AG04449 (cell line): ENCODE measurements at regions of chr16 and their contacts with region 1.

Region 1: DNA sequence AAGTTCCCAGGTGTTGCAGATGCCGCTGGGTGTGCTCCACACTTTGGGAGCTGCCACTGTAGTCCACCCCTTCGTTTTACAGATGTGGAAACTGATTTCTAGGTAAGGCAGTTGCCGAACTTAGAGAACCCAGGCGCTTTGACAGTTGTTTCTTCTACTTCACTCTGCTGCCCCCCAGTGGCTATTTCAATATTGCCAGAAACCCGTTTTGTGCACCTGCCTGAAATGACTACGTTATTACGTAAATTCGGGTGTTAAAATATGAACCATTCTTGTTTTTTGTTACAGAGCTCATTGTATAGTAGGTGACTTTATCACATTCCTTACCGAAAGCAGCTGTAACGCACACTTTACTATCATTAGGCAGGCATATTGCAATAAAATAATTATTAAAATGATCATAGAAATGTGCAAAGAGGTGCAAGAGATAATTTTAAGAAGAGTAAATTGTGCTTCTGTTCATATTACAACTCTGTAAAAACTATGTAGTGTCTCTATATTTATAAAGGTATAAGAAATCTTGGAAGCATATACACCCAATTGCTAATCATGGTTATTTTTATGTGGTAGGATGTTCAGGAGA is 44.9 kb downstream of the OTOA start:
- DNase-seq: peak; percentile 7
- H3K4me3 ChIP-seq: no peak overlapping the region
- CTCF ChIP-seq: peak; percentile 53

Region 2: DNA sequence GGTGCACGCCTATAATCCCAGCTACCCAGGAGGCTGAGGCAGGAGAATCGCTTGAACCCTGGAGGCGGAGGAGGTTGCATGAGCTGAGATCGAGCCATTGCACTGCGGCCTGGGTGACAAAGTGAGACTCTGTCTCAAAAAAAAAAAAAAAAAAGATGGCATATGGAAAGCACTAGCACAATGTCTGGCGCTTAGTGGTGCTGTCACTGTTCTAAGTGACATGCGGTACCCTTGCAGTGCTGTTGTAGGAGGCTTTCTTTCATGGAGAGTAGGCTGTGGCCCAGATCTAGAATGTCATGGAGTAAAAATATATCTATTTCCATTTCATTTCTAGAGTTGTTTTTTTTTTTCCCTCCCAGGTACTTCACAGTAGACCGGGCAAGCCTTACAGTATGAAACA is 123.8 kb before region 1 on chr16:
- CTCF ChIA-PET with region 1: interaction called, 22 read pairs
- POLR2A ChIA-PET with region 1: no interaction called
- DNase-seq: no peak
- H3K4me3 ChIP-seq: no peak overlapping the region
- CTCF ChIP-seq: no peak

Region 3: DNA sequence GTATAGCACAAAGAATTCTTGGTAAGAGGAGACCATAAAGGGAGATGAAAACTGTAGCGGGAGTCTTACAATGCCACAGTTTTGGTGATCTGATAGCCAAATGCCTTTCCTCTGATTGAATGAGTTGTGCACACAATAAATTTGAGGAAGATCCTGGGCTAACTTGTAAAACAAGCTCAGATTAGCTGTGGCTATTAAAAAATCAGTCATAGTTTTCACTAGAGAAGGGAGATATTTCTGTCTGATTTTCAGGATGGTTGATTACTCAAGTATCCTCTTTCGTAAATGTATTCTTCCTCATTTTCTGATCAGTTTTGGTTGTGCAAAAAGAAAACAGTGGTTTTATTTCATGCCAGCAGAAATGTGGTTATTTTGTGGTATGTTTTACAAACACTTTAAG is 118.3 kb before region 1 on chr16:
- CTCF ChIA-PET with region 1: interaction called, 17 read pairs
- POLR2A ChIA-PET with region 1: no interaction called
- DNase-seq: no peak
- H3K4me3 ChIP-seq: no peak overlapping the region
- CTCF ChIP-seq: no peak

Region 4: GRCh38 chr16:21684199-21684598 is 24.4 kb before region 1 on chr16:
- CTCF ChIA-PET with region 1: interaction called, 13 read pairs
- POLR2A ChIA-PET with region 1: no interaction called
- DNase-seq: no peak
- H3K4me3 ChIP-seq: no peak overlapping the region
- CTCF ChIP-seq: peak; percentile 13

Region 5: DNA sequence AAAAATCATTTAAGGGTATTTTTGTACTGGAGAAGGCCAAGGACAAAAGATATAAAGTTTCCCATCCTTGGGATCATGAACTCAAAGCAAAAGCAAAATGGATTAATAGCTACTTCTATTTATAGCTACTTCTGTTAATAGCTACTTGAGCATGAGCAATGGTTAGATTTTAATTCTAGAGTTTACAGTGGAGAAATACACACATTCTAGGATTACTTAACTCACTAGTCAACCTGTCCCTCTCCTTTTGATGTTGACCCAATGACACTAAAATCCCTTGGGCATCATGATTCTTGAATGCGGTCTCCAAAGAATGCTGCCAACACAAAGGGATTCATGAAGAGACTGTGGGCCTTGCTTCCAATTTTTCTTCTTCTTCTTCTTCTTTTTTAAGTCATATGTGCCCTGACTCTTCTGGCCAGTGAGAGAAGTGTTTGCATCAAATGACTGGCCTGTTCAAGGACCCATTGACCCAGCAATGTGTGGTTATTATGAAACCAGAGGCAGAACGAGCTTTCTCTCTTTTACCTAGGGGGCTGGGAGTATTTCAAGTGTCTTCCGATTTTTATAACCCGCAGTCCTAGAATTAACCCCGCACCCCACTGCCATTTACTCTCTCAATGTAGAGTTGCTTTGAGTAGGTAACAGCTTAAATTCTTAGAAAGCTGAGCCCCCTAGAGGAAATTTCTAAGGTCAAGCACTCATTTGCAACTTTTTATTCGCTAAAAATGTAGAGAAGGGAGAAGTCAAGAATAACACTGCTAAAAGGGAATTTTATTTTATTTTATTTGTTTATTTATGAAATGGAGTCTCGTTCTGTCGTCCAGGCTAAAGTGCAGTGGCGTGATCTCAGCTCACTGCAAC is 10.2 kb before region 1 on chr16:
- CTCF ChIA-PET with region 1: interaction called, 28 read pairs
- POLR2A ChIA-PET with region 1: no interaction called
- DNase-seq: no peak
- H3K4me3 ChIP-seq: no peak overlapping the region
- CTCF ChIP-seq: no peak

Region 6: GRCh38 chr16:21719283-21719682 is 10.7 kb after region 1 on chr16:
- CTCF ChIA-PET with region 1: interaction called, 37 read pairs
- POLR2A ChIA-PET with region 1: no interaction called
- DNase-seq: no peak
- H3K4me3 ChIP-seq: no peak overlapping the region
- CTCF ChIP-seq: no peak

Region 7: DNA sequence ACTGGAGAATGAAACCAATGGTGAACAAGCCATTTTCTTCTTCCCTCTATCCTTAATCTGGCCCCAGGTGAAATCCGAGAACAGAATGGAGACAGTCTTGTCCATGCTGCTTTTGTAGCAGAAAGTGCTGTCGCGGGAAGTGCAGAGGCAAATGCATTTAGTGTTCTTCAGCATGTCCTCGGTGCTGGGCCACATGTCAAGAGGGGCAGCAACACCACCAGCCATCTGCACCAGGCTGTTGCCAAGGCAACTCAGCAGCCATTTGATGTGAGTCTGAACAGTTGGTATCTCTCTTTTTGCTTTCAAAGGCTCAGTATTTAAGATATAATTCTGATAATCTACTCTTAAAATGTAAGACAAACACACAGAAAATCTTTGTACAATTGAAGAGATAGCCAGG is 263.2 kb after region 1 on chr16:
- CTCF ChIA-PET with region 1: no interaction called
- POLR2A ChIA-PET with region 1: no interaction called
- DNase-seq: no peak
- H3K4me3 ChIP-seq: no peak overlapping the region
- CTCF ChIP-seq: no peak

Region 8: DNA sequence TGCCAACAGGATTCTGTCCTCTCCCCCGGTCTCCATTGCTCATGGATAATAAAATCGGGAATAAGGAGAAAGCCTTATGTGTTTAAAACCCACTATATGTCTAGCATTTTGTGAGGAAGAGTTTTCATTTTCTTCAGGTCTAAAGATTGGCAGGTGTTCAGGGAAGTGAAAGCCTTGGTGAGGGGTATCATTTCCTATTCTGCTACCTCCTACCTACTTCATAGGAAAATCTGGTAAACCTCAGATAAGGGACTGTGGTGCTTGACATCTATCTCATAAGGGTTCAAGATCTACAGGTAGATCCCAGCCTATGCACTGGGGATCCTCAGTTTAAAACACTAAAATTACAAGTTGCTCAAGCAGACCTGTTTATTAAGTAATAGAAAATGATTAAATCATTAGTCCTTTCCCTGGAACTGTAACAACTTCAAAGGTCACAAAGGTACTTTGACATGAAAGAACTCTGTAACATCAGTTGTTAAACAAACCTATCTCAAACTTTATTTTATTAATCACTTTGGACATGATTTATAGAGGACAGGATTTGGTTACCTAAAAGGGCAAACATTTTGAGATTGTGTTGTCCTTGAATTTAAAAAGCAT is 305.7 kb after region 1 on chr16:
- CTCF ChIA-PET with region 1: no interaction called
- POLR2A ChIA-PET with region 1: no interaction called
- DNase-seq: no peak
- H3K4me3 ChIP-seq: no peak overlapping the region
- CTCF ChIP-seq: no peak

Region 9: DNA sequence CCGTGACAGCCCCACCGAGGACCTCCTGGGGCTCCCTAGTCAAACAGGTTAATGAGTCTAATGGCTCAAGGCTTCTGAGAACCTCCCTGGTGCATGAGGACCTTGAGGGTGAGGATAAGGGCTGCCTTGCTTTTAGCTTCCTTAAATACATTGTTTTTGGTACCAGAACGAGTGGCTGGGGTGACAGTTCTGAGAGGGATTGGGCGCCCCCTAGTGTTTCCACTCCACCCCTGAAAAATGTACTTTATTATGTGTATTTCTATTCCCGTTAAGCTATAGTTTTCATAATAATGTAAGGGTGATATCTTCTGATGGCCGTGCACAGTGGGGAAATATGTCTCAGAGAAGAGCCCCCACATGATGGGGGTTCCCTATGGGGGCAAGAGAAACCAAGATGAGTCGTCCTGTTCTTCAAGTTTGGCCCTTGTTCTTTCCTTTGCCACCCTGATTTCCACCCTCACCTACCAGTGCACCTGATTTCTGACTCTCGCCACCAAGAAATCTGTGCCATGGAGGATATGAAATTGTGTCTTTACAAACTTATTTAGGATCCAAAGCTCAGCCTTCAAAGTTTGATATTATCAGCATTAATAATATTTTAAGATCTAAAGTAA is 369.2 kb after region 1 on chr16:
- CTCF ChIA-PET with region 1: no interaction called
- POLR2A ChIA-PET with region 1: no interaction called
- DNase-seq: no peak
- H3K4me3 ChIP-seq: no peak overlapping the region
- CTCF ChIP-seq: peak; percentile 72